ENCODE measurements at regions of chrX and their contacts with region 1.

Region 1: GRCh38 chrX:17744896-17745523 is 7.7 kb downstream of the SCML1 start:
- DNase-seq: no peak
- ATAC-seq: no peak
- H3K4me3 Mint-ChIP-seq: no peak overlapping the region
- H3K27ac Mint-ChIP-seq: no peak overlapping the region
- H3K4me1 Mint-ChIP-seq: peaks cover 19% of the 10 kb centered on the region
- H3K27me3 Mint-ChIP-seq: peaks cover 2% of the 10 kb centered on the region

Region 2: GRCh38 chrX:17328837-17329236 is 416.2 kb before region 1 on chrX:
- CTCF ChIA-PET with region 1: no interaction called
- POLR2A ChIA-PET with region 1: no interaction called
- intact Hi-C with region 1: no loop called
- DNase-seq: no peak
- ATAC-seq: no peak
- H3K4me3 Mint-ChIP-seq: no peak overlapping the region
- H3K27ac Mint-ChIP-seq: no peak overlapping the region
- H3K4me1 Mint-ChIP-seq: no peaks in the 10 kb centered on the region
- H3K27me3 Mint-ChIP-seq: no peaks in the 10 kb centered on the region

Region 3: GRCh38 chrX:17590892-17591740 is 153.9 kb before region 1 on chrX:
- CTCF ChIA-PET with region 1: no interaction called
- POLR2A ChIA-PET with region 1: no interaction called
- intact Hi-C with region 1: no loop called
- DNase-seq: peak; percentile 68
- ATAC-seq: peak; percentile 82
- H3K4me3 Mint-ChIP-seq: no peak overlapping the region
- H3K27ac Mint-ChIP-seq: peak overlapping the region; percentile 20
- H3K4me1 Mint-ChIP-seq: peaks cover 23% of the 10 kb centered on the region
- H3K27me3 Mint-ChIP-seq: peaks cover 6% of the 10 kb centered on the region

Region 4: GRCh38 chrX:17662391-17662790 is 82.6 kb before region 1 on chrX:
- CTCF ChIA-PET with region 1: no interaction called
- POLR2A ChIA-PET with region 1: no interaction called
- intact Hi-C with region 1: no loop called
- DNase-seq: no peak
- ATAC-seq: no peak
- H3K4me3 Mint-ChIP-seq: no peak overlapping the region
- H3K27ac Mint-ChIP-seq: no peak overlapping the region
- H3K4me1 Mint-ChIP-seq: no peaks in the 10 kb centered on the region
- H3K27me3 Mint-ChIP-seq: no peaks in the 10 kb centered on the region

Region 5: GRCh38 chrX:17773221-17773876 is 28.3 kb after region 1 on chrX:
- CTCF ChIA-PET with region 1: no interaction called
- POLR2A ChIA-PET with region 1: no interaction called
- intact Hi-C with region 1: loop called in 1 of 2 experiments (anchors 2 kb)
- DNase-seq: no peak
- ATAC-seq: peak; percentile 11
- H3K4me3 Mint-ChIP-seq: no peak overlapping the region
- H3K27ac Mint-ChIP-seq: no peak overlapping the region
- H3K4me1 Mint-ChIP-seq: peaks cover 12% of the 10 kb centered on the region
- H3K27me3 Mint-ChIP-seq: no peaks in the 10 kb centered on the region

Region 6: GRCh38 chrX:17923546-17923945 is 178.5 kb after region 1 on chrX:
- CTCF ChIA-PET with region 1: no interaction called
- POLR2A ChIA-PET with region 1: no interaction called
- intact Hi-C with region 1: loop called in 1 of 2 experiments (anchors 10 kb)
- DNase-seq: peak; percentile 20
- ATAC-seq: peak; percentile 93
- H3K4me3 Mint-ChIP-seq: no peak overlapping the region
- H3K27ac Mint-ChIP-seq: no peak overlapping the region
- H3K4me1 Mint-ChIP-seq: peaks cover 8% of the 10 kb centered on the region
- H3K27me3 Mint-ChIP-seq: no peaks in the 10 kb centered on the region

Region 7: GRCh38 chrX:18210470-18210869 is 465.5 kb after region 1 on chrX:
- CTCF ChIA-PET with region 1: no interaction called
- POLR2A ChIA-PET with region 1: no interaction called
- intact Hi-C with region 1: loop called in 1 of 2 experiments (anchors 5 kb)
- DNase-seq: no peak
- ATAC-seq: no peak
- H3K4me3 Mint-ChIP-seq: no peak overlapping the region
- H3K27ac Mint-ChIP-seq: no peak overlapping the region
- H3K4me1 Mint-ChIP-seq: no peaks in the 10 kb centered on the region
- H3K27me3 Mint-ChIP-seq: no peaks in the 10 kb centered on the region

Region 8: DNA sequence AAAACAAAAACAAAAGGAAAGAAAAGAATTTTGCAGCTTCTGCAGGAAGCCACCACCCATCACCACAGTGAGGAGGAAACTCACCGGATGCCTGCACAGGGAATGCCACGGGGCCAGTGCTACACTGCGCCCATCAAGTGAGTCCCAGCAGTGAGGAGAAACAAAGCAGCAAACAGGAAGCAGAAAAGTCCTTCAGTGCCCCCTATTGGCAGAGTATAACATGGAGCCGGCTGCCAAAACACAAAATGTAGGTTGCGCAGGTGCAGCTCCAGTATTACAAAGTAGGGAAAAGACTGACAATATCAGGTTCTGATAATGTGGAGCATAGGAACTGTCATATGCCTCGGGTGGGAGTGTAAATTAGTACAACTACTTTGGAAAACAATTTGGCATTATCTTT is 632.8 kb after region 1 on chrX:
- CTCF ChIA-PET with region 1: interaction called, 3 read pairs
- POLR2A ChIA-PET with region 1: no interaction called
- intact Hi-C with region 1: loop called (anchors 1 to 5 kb)
- DNase-seq: peak; percentile 41
- ATAC-seq: peak; percentile 71
- H3K4me3 Mint-ChIP-seq: no peak overlapping the region
- H3K27ac Mint-ChIP-seq: no peak overlapping the region
- H3K4me1 Mint-ChIP-seq: peaks cover 4% of the 10 kb centered on the region
- H3K27me3 Mint-ChIP-seq: no peaks in the 10 kb centered on the region

Measured in activated CD4-positive, alpha-beta T cell treated with anti-CD3 and anti-CD28 coated beads for 36 hours (primary cell).